GM23248 (cell line): ENCODE measurements at regions of chr3 and their contacts with region 1.

Region 1: GRCh38 chr3:46488735-46489361 is 8.9 kb upstream of the RTP3 start:
- DNase-seq: peak; percentile 96
- H3K4me3 ChIP-seq: no peak overlapping the region
- H3K27ac ChIP-seq: no peak overlapping the region
- H3K4me1 ChIP-seq: 0 out of 2 replicates have a peak, but pooled peaks cover 8% of the 10 kb centered on the region
- H3K27me3 ChIP-seq: 0 out of 2 replicates have a peak, but pooled peaks cover 3% of the 10 kb centered on the region

Region 2: GRCh38 chr3:46629551-46630517 is 141.0 kb after region 1 on chr3:
- in situ Hi-C with region 1: loop called (anchors 10 kb)
- DNase-seq: peak; percentile 94
- H3K4me3 ChIP-seq: peak overlapping the region; percentile 58
- H3K27ac ChIP-seq: peak overlapping the region; percentile 62
- H3K4me1 ChIP-seq: peaks cover 22% of the 10 kb centered on the region
- H3K27me3 ChIP-seq: no peaks in the 10 kb centered on the region